GM12878 (cell line): ENCODE measurements at regions of chr7 and their contacts with region 1.

Region 1: GRCh38 chr7:158976849-158977593 is 120.7 kb downstream of the DYNC2I1 start:
- DNase-seq: peak; percentile 71
- ATAC-seq: peak; percentile 93
- H3K4me3 ChIP-seq: peak overlapping the region; percentile 59
- H3K27ac ChIP-seq: peak overlapping the region; percentile 52
- H3K4me1 ChIP-seq: peaks cover 16% of the 10 kb centered on the region
- H3K27me3 ChIP-seq: no peaks in the 10 kb centered on the region
- CTCF ChIP-seq: peak; percentile 84 to 94 (median 90); a peak in 5 of 6 replicates
- EP300 ChIP-seq: peak in 1 of 2 experiments; percentile 37; a peak in 1 of 4 replicates
- POLR2A ChIP-seq: no peak
- RAD21 ChIP-seq: peak; percentile 84

Region 2: DNA sequence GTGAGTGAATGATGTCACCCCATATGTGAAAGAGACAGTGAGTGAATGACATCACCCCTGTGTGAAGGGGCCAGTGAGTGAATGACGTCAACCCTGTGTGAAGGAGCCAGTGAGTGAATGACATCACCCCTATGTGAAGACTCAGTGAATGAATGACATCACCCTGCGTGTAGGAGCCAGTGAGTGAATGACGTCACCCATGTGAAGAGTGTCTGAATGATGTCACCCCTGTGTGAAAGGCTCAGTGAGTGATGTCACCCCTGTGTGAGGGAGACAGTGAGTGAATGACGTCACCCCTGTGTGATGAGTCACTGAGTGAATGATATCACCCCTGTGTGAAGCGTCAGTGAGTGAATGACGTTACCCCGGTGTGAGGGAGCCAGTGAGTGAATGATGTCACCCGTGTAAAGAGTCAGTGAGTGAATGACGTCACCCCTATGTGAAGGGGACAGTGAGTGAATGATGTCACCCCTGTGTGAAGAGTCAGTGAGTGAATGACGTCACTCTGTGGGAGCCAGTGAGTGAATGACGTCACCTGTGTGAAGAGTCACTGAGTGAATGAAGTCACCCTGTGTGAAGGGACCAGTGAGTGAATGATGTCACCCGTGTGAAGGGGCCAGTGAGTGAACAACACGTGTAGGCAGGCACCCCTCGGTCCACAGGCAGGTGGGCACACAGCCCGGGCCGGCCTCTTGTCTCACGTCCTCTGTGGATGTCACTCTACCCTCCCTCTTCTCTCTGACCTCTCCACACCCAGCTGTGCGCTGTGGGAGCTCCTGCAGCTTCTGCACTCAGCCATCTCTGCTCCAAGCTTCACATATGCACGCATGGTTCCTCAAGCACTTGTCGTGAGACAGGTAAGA is 867.4 kb before region 1 on chr7:
- CTCF ChIA-PET with region 1: no interaction called
- POLR2A ChIA-PET with region 1: no interaction called
- RAD21 ChIA-PET with region 1: no interaction called
- SMC1A ChIA-PET with region 1: no interaction called
- in situ Hi-C with region 1: no loop called
- intact Hi-C with region 1: no loop called
- DNase-seq: no peak
- ATAC-seq: no peak
- H3K4me3 ChIP-seq: no peak overlapping the region
- H3K27ac ChIP-seq: no peak overlapping the region
- H3K4me1 ChIP-seq: no peaks in the 10 kb centered on the region
- H3K27me3 ChIP-seq: no peaks in the 10 kb centered on the region
- CTCF ChIP-seq: no peak
- EP300 ChIP-seq: no peak
- POLR2A ChIP-seq: no peak
- RAD21 ChIP-seq: no peak

Region 3: GRCh38 chr7:158689488-158689887 is 287.5 kb before region 1 on chr7:
- CTCF ChIA-PET with region 1: interaction called, 78 read pairs
- POLR2A ChIA-PET with region 1: no interaction called
- RAD21 ChIA-PET with region 1: interaction called, 59 read pairs
- SMC1A ChIA-PET with region 1: interaction called, 62 read pairs
- in situ Hi-C with region 1: no loop called
- intact Hi-C with region 1: no loop called
- DNase-seq: no peak
- ATAC-seq: no peak
- H3K4me3 ChIP-seq: no peak overlapping the region
- H3K27ac ChIP-seq: no peak overlapping the region
- H3K4me1 ChIP-seq: no peaks in the 10 kb centered on the region
- H3K27me3 ChIP-seq: no peaks in the 10 kb centered on the region
- CTCF ChIP-seq: no peak
- EP300 ChIP-seq: no peak
- POLR2A ChIP-seq: no peak
- RAD21 ChIP-seq: no peak

Region 4: DNA sequence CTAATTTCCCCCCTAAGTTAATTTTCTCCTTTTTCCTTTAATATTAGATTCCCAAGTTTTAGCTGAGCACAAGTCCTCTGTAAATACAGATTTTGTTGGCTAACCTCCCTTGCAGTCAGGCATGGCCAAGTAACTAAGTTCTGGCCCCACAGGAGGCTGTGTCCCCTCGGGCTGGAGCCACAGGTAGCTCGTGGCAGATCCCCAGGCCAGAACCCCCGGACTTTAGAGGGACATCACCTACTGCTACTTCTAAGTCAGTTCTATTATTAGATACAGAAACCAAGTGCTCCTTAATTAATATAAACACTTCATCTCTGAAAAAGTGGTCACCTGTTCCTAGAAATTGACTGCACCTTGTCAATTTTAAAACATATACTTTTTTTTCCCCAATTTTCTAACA is 226.3 kb before region 1 on chr7:
- CTCF ChIA-PET with region 1: interaction called, 4 read pairs
- POLR2A ChIA-PET with region 1: no interaction called
- RAD21 ChIA-PET with region 1: interaction called, 9 read pairs
- SMC1A ChIA-PET with region 1: interaction called, 11 read pairs
- in situ Hi-C with region 1: no loop called
- intact Hi-C with region 1: no loop called
- DNase-seq: no peak
- ATAC-seq: no peak
- H3K4me3 ChIP-seq: no peak overlapping the region
- H3K27ac ChIP-seq: no peak overlapping the region
- H3K4me1 ChIP-seq: no peaks in the 10 kb centered on the region
- H3K27me3 ChIP-seq: no peaks in the 10 kb centered on the region
- CTCF ChIP-seq: no peak
- EP300 ChIP-seq: no peak
- POLR2A ChIP-seq: no peak
- RAD21 ChIP-seq: no peak

Region 5: DNA sequence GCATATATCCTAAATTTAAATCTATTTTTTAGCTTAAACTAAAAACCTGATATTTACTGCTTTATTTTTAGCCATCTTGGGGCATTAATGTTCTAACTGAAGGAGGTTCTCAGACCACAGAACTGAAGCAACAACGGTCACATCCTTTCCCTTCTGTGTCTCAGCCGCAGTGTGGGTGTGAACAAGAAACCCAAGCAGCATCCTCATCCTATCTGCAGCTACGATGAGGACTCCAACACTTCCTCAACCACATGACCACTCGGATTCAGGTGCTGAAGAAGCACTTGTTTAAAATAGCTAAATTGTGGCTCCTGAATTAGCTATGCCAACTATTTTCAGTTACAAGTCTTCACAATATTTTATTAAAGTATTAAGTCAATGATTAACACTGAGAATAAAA is 153.0 kb before region 1 on chr7:
- CTCF ChIA-PET with region 1: interaction called, 17 read pairs
- POLR2A ChIA-PET with region 1: no interaction called
- RAD21 ChIA-PET with region 1: interaction called, 27 read pairs
- SMC1A ChIA-PET with region 1: interaction called, 5 read pairs
- in situ Hi-C with region 1: no loop called
- intact Hi-C with region 1: loop called (anchors 1 kb)
- DNase-seq: peak; percentile 61
- ATAC-seq: peak; percentile 74
- H3K4me3 ChIP-seq: no peak overlapping the region
- H3K27ac ChIP-seq: peak overlapping the region; percentile 46
- H3K4me1 ChIP-seq: peaks cover 21% of the 10 kb centered on the region
- H3K27me3 ChIP-seq: no peaks in the 10 kb centered on the region
- CTCF ChIP-seq: no peak
- EP300 ChIP-seq: peak; percentile 36 to 54; a peak in 1 of 4 replicates
- POLR2A ChIP-seq: peak; percentile 57; the same call in 1 of the 2 replicates
- RAD21 ChIP-seq: no peak

Region 6: DNA sequence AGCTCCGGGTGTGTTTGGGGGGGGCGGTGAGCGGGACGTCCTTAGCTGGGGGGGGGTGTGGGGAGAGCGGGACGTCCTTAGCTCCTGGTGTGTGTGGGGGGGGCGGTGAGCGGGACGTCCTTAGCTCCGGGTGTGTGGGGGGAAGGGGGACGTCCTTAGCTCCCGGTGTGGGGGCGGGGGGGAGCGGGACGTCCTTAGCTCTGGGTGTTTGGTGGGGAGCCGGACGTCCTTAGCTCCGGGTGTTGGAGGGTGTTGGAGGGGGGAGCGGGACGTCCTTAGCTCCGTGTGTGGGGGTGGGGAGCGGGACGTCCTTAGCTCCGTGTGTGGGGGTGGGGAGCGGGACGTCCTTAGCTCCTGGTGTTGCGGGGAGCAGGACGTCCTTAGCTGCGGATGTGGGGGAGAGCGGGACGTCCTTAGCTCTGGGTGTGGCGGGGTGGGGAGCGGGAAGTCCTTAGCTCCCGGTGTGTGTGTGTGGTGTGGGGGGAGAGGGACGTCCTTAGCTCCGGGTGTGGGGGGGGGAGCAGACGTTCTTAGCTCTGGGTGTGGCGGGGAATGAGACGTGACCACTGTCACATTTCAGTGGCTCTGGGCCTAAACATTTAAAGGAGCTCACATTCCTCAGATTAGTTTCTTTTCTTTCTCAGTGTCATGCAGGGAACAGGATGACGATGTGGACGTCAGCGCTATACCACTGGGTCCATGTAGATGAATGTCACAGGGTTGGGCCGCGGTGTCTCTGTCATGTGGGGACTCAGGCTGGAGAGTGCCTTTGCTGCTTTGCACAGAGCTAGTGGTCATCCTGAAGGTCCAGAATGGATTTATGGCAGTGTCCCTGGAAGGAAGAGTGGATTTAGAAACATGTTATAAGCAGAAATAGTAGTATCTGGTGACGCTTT is 113.2 kb before region 1 on chr7:
- CTCF ChIA-PET with region 1: interaction called, 11 read pairs
- POLR2A ChIA-PET with region 1: interaction called, 5 read pairs
- RAD21 ChIA-PET with region 1: interaction called, 32 read pairs
- SMC1A ChIA-PET with region 1: interaction called, 9 read pairs
- in situ Hi-C with region 1: no loop called
- intact Hi-C with region 1: no loop called
- DNase-seq: peak; percentile 33
- ATAC-seq: peak; percentile 71
- H3K4me3 ChIP-seq: peak overlapping the region; percentile 60
- H3K27ac ChIP-seq: peak overlapping the region; percentile 52
- H3K4me1 ChIP-seq: peaks cover 8% of the 10 kb centered on the region
- H3K27me3 ChIP-seq: no peaks in the 10 kb centered on the region
- CTCF ChIP-seq: no peak
- EP300 ChIP-seq: no peak
- POLR2A ChIP-seq: peak; percentile 60; the same call in 1 of the 2 replicates
- RAD21 ChIP-seq: no peak

Region 7: DNA sequence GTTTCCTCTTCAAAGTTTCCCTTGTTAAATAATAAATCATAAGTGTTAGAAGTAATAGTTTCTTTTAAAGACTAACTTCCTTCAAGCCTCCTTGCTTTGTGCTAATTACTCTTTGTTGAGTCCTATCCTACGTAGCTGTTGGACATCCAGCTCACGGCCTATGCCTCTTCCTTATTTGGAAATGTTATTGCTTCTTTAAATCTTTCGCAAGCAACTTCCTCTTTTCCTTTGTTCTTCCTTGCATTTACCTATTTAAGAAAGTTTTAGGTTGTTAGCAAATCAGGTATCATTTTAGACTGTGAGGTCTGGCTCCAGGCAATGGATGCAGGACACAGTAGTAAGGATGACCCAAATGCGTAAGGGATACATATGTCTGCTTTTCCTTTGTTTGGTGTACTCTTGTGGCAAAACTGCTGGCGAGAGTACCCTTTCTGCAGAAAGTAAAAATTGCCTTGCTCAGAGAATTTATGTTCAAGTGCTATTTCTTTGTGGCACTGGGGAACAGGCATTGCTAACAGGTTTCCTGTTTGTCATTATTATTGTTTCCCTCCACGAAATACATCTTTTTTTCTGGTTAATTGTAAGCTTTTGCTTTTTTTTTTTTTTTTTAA is 10.1 kb before region 1 on chr7:
- CTCF ChIA-PET with region 1: interaction called, 17 read pairs
- POLR2A ChIA-PET with region 1: interaction called, 7 read pairs
- RAD21 ChIA-PET with region 1: no interaction called
- SMC1A ChIA-PET with region 1: interaction called, 11 read pairs
- in situ Hi-C with region 1: no loop called
- intact Hi-C with region 1: no loop called
- DNase-seq: no peak
- ATAC-seq: no peak
- H3K4me3 ChIP-seq: no peak overlapping the region
- H3K27ac ChIP-seq: no peak overlapping the region
- H3K4me1 ChIP-seq: no peaks in the 10 kb centered on the region
- H3K27me3 ChIP-seq: no peaks in the 10 kb centered on the region
- CTCF ChIP-seq: no peak
- EP300 ChIP-seq: no peak
- POLR2A ChIP-seq: no peak
- RAD21 ChIP-seq: no peak